ENCODE measurements at regions of chr1 and their contacts with region 1.

Region 1: DNA sequence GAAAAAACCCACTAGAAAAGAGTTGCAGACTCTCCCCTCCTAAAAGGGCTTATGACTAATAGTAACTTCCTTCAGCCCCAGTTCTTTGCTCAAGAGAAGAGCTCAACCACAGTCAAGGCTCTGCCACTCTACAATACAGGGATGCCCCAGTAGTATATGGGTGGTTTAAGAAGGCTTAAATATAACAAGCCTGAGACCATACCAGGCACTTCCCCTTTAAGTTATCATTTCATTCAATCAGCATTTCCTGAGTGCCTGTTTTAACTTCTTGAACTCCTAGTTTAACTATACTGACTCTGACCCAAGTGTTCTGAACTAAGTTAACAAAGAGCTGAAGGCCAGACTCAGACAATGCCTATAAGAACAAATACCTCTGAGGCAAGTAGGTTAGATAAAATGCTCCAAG is 19.8 kb downstream of the PRPF38A start:
- DNase-seq: peak in 8 of 9 experiments; percentile 11 to 81 (median 46)
- ATAC-seq: peak; percentile 91
- H3K4me3 ChIP-seq: no peak overlapping the region
- H3K4me3 Mint-ChIP-seq: peak overlapping the region; percentile 44
- H3K27ac ChIP-seq: peak overlapping the region; percentile 60 to 72
- H3K27ac Mint-ChIP-seq: peak overlapping the region; percentile 99
- H3K4me1 ChIP-seq: peaks cover 44% of the 10 kb centered on the region
- H3K4me1 Mint-ChIP-seq: peaks cover 41% of the 10 kb centered on the region
- H3K27me3 ChIP-seq: no peaks in the 10 kb centered on the region
- H3K27me3 Mint-ChIP-seq: no peaks in the 10 kb centered on the region
- CTCF ChIP-seq: no peak

Region 2: DNA sequence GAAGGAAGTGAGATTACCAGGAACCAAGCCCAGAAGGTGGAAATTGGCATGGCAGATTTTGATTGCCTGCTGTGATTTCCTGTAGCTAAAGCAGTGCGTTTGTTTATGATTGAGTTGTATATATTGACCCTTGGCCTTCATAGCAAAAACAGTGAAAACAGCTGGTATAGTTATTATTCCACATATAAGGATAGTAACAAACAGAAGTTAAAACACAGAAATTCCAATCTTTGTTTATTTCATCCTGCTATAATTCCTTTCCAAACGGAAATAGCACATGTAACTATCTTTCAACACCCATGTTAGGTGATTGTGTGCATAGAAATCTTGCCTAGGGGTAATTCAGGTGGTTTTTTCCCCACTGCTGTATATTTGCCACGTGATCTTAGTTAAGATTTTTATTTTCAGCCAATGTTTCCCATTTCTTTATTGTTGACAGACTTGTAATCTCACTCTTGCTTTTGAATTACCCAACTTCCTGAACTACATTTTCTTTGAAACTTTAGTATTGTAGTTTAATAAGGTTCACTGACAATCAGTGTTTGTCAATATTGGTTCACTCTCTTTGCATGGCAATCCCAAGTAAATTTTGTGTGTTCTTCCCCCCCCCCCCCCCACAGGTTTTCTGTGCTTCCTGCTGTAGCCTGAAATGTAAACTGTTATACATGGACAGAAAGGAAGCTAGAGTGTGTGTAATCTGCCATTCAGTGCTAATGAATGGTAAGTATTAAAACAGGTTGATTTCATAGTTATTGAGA is 160.9 kb before region 1 on chr1:
- CTCF ChIA-PET with region 1: no interaction called
- POLR2A ChIA-PET with region 1: no interaction called
- intact Hi-C with region 1: no loop called
- DNase-seq: no peak
- ATAC-seq: no peak
- H3K4me3 ChIP-seq: no peak overlapping the region
- H3K4me3 Mint-ChIP-seq: no peak overlapping the region
- H3K27ac ChIP-seq: no peak overlapping the region
- H3K27ac Mint-ChIP-seq: no peak overlapping the region
- H3K4me1 ChIP-seq: no peaks in the 10 kb centered on the region
- H3K4me1 Mint-ChIP-seq: no peaks in the 10 kb centered on the region
- H3K27me3 ChIP-seq: no peaks in the 10 kb centered on the region
- H3K27me3 Mint-ChIP-seq: no peaks in the 10 kb centered on the region
- CTCF ChIP-seq: no peak

Region 3: GRCh38 chr1:52348704-52349300 is 75.4 kb before region 1 on chr1:
- CTCF ChIA-PET with region 1: no interaction called
- POLR2A ChIA-PET with region 1: no interaction called
- intact Hi-C with region 1: no loop called
- DNase-seq: no peak
- ATAC-seq: no peak
- H3K4me3 ChIP-seq: no peak overlapping the region
- H3K4me3 Mint-ChIP-seq: no peak overlapping the region
- H3K27ac ChIP-seq: peak overlapping the region; percentile 18 to 33
- H3K27ac Mint-ChIP-seq: peak overlapping the region; percentile 86
- H3K4me1 ChIP-seq: no peaks in the 10 kb centered on the region
- H3K4me1 Mint-ChIP-seq: peaks cover 5% of the 10 kb centered on the region
- H3K27me3 ChIP-seq: no peaks in the 10 kb centered on the region
- H3K27me3 Mint-ChIP-seq: no peaks in the 10 kb centered on the region
- CTCF ChIP-seq: no peak

Region 4: DNA sequence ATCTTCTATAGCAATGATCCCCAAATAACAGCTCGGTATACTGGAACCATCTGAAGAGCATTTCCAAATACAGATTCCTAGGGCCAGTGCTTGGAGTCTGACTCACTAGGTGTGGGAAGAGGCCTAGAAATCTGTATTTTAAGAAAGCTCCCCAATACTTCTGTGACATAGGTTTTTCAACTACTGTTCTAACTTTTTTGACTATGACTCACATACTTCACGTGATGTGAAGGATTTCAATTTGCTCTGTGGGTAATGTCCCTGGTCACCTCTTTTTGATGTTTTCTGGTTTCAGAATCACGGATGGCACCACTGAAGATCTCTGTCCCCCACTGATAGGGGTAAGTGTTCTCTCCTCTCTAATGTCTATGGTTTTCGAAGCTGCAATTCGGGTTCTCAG is 31.1 kb before region 1 on chr1:
- CTCF ChIA-PET with region 1: no interaction called
- POLR2A ChIA-PET with region 1: no interaction called
- intact Hi-C with region 1: no loop called
- DNase-seq: no peak
- ATAC-seq: no peak
- H3K4me3 ChIP-seq: no peak overlapping the region
- H3K4me3 Mint-ChIP-seq: no peak overlapping the region
- H3K27ac ChIP-seq: no peak overlapping the region
- H3K27ac Mint-ChIP-seq: no peak overlapping the region
- H3K4me1 ChIP-seq: no peaks in the 10 kb centered on the region
- H3K4me1 Mint-ChIP-seq: no peaks in the 10 kb centered on the region
- H3K27me3 ChIP-seq: no peaks in the 10 kb centered on the region
- H3K27me3 Mint-ChIP-seq: no peaks in the 10 kb centered on the region
- CTCF ChIP-seq: no peak

Region 5: DNA sequence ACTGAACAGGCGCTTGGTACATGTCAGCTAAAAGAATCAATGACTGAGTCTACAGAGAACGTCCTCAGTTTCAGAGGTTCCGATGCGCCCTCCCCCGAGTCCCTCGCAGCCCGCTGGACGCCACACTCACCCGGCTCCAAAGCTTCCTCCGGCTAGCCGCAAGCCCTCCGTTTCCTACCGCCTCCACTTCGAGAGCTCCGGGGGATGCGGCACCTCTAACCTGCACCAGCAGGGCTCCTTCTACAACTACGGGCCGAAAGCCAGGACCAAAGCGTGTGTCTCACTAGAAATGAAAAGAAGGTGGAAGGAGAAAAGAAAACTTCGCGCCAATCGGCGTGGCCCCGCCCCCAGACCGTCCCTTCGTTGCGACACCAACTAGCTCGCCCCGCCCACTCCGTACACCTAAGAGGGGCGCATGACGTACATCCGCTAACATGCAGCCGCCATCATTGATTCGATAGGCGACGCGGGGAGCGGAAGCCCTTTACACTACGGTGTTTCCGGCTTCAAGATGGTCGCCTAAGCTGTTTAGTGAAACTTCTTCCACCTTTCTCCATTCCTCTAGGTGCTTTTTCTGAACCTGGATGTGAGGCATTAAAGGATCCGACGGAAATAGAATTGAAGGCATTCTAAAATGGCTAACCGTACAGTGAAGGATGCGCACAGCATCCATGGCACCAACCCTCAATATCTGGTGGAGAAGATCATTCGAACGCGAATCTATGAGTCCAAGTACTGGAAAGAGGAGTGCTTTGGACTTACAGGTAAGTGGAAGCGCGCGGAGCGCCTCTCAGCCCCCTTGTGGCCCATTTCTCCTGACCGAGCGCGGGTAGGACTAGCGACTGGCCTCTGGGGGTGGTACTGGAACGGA is 19.9 kb before region 1 on chr1 and contains the starts of genes ORC1 and PRPF38A:
- CTCF ChIA-PET with region 1: no interaction called
- POLR2A ChIA-PET with region 1: interaction called, 21 read pairs
- intact Hi-C with region 1: loop called (anchors 1 kb)
- DNase-seq: peak; percentile 94 to 99 (median 98)
- ATAC-seq: peak; percentile 92
- H3K4me3 ChIP-seq: peak within 1 kb of the TSS; percentile 87 to 92
- H3K4me3 Mint-ChIP-seq: peak within 1 kb of the TSS; percentile 99
- H3K27ac ChIP-seq: peak within 1 kb of the TSS; percentile 96
- H3K27ac Mint-ChIP-seq: peak within 1 kb of the TSS; percentile 98
- H3K4me1 ChIP-seq: peaks cover 26% of the 10 kb centered on the region
- H3K4me1 Mint-ChIP-seq: peaks cover 42% of the 10 kb centered on the region
- H3K27me3 ChIP-seq: no peaks in the 10 kb centered on the region
- H3K27me3 Mint-ChIP-seq: no peaks in the 10 kb centered on the region
- CTCF ChIP-seq: no peak
- total RNA-seq, gene ORC1: 1.2 to 1.3 TPM
- total RNA-seq, gene PRPF38A: 52.2 to 62.0 TPM

Region 6: GRCh38 chr1:52469108-52469507 is 44.9 kb after region 1 on chr1:
- CTCF ChIA-PET with region 1: no interaction called
- POLR2A ChIA-PET with region 1: no interaction called
- intact Hi-C with region 1: no loop called
- DNase-seq: no peak
- ATAC-seq: no peak
- H3K4me3 ChIP-seq: no peak overlapping the region
- H3K4me3 Mint-ChIP-seq: no peak overlapping the region
- H3K27ac ChIP-seq: no peak overlapping the region
- H3K27ac Mint-ChIP-seq: no peak overlapping the region
- H3K4me1 ChIP-seq: no peaks in the 10 kb centered on the region
- H3K4me1 Mint-ChIP-seq: peaks cover 2% of the 10 kb centered on the region
- H3K27me3 ChIP-seq: no peaks in the 10 kb centered on the region
- H3K27me3 Mint-ChIP-seq: no peaks in the 10 kb centered on the region
- CTCF ChIP-seq: no peak

Region 7: DNA sequence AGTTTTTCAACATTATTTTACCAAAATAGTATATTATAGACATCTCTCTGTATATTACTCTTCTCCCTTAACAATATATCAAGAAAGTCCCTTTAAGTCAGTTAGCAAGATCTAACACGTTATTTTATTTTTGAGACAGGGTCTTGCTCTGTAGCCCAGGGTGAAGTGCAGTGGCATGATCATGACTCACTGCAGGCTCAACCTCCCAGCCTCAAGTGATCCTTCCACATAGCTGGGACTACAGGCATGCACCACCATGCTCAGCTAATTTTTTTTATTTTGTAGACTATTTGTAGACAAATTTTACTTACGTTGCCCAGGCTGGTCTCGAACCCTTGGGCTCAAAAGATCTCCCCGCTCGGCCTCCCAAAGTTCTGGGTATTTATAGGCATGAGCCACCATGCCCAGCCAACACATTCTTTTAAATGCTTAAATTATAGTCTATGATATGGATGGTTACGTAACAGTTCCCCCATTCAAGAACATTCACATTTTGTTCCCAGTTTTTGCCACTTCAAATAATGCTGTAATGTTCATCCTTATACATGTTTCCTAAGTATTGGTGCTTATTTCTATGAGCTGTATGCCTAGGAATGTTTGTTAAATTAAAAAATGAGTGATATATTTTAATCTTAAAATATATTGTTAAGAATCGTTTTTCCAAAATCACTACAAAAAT is 58.2 kb after region 1 on chr1:
- CTCF ChIA-PET with region 1: no interaction called
- POLR2A ChIA-PET with region 1: interaction called, 3 read pairs
- intact Hi-C with region 1: loop called in 1 of 2 experiments (anchors 10 kb)
- DNase-seq: no peak
- ATAC-seq: no peak
- H3K4me3 ChIP-seq: no peak overlapping the region
- H3K4me3 Mint-ChIP-seq: no peak overlapping the region
- H3K27ac ChIP-seq: no peak overlapping the region
- H3K27ac Mint-ChIP-seq: no peak overlapping the region
- H3K4me1 ChIP-seq: no peaks in the 10 kb centered on the region
- H3K4me1 Mint-ChIP-seq: no peaks in the 10 kb centered on the region
- H3K27me3 ChIP-seq: no peaks in the 10 kb centered on the region
- H3K27me3 Mint-ChIP-seq: no peaks in the 10 kb centered on the region
- CTCF ChIP-seq: no peak

Measured in CD8-positive, alpha-beta T cell (primary cell).